ENCODE measurements at regions of chr22 and their contacts with region 1.

Region 1: GRCh38 chr22:44625981-44626687 is 75.9 kb upstream of the PRR5 start:
- DNase-seq: peak; percentile 45
- ATAC-seq: peak; percentile 86
- H3K4me3 ChIP-seq: no peak overlapping the region
- H3K27ac ChIP-seq: no peak overlapping the region
- H3K4me1 ChIP-seq: no peaks in the 10 kb centered on the region
- H3K27me3 ChIP-seq: peaks cover 8% of the 10 kb centered on the region; the same call in 1 of the 2 replicates
- CTCF ChIP-seq: peak; percentile 99
- POLR2A ChIP-seq: peak; percentile 63
- RAD21 ChIP-seq: peak; percentile 100

Region 2: GRCh38 chr22:44080936-44081861 is 544.9 kb before region 1 on chr22:
- CTCF ChIA-PET with region 1: interaction called, 4 read pairs
- POLR2A ChIA-PET with region 1: no interaction called
- dilution Hi-C with region 1: no loop called
- in situ Hi-C with region 1: loop called (anchors 5 kb)
- intact Hi-C with region 1: loop called (anchors 1 kb)
- DNase-seq: peak; percentile 68
- ATAC-seq: peak; percentile 92
- H3K4me3 ChIP-seq: no peak overlapping the region
- H3K27ac ChIP-seq: no peak overlapping the region
- H3K4me1 ChIP-seq: peaks cover 2% of the 10 kb centered on the region; the same call in 1 of the 2 replicates
- H3K27me3 ChIP-seq: no peaks in the 10 kb centered on the region
- CTCF ChIP-seq: peak; percentile 82
- POLR2A ChIP-seq: no peak
- RAD21 ChIP-seq: peak; percentile 92

Region 3: DNA sequence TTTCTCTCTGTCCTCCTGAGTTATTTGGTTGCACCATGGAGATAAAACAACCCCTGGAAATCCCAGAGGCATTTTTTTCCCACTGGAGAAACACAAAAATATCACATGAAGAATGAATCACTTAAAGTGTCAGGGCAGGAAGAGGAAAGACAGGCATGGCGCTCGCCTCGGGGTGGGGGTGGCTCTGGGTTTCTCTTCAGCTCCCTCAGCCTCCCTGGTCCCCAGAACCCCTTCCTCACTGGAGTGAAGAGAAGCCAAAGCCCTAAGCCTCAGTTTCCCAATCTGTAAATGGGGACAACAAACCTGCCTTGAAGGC is 314.3 kb before region 1 on chr22:
- CTCF ChIA-PET with region 1: no interaction called
- POLR2A ChIA-PET with region 1: no interaction called
- dilution Hi-C with region 1: no loop called
- in situ Hi-C with region 1: loop called (anchors 10 kb)
- intact Hi-C with region 1: no loop called
- DNase-seq: peak; percentile 73
- ATAC-seq: no peak
- H3K4me3 ChIP-seq: no peak overlapping the region
- H3K27ac ChIP-seq: no peak overlapping the region
- H3K4me1 ChIP-seq: peaks cover 18% of the 10 kb centered on the region
- H3K27me3 ChIP-seq: no peaks in the 10 kb centered on the region
- CTCF ChIP-seq: no peak
- POLR2A ChIP-seq: no peak
- RAD21 ChIP-seq: no peak; the same call in 1 of the 2 replicates

Region 4: DNA sequence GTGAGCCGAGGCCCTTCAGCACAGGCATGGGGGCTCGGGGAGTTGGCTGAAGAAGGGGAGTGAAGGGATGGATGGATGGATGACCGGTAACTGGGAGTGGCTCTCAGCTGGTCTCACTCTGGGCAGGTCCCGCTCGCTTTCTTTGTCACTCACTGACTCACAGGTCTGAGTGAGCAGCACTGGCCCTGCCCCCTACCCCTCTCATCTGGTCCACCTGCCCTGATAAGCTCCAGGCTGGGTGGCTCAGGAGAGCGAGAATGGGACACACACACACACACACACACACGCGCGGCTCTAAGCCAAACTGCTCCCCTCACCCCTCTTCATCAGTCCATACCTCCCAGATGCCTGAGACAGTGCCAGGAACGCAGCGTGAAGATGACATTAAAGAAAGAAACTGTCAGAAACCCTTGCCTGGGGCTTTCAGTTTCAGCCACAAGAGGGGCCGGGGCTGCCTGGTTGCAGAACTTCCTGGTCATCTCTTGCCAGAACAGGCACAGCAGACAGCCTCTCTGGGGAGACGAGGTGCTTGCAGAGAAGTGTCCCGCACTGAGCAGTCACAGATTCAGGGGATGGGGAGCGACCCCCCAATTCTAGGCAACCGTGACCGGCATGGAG is 296.8 kb before region 1 on chr22:
- CTCF ChIA-PET with region 1: no interaction called
- POLR2A ChIA-PET with region 1: no interaction called
- dilution Hi-C with region 1: no loop called
- in situ Hi-C with region 1: no loop called
- intact Hi-C with region 1: loop called (anchors 1 kb)
- DNase-seq: peak; percentile 27
- ATAC-seq: no peak
- H3K4me3 ChIP-seq: no peak overlapping the region
- H3K27ac ChIP-seq: no peak overlapping the region
- H3K4me1 ChIP-seq: peaks cover 13% of the 10 kb centered on the region; the same call in 1 of the 2 replicates
- H3K27me3 ChIP-seq: peaks cover 16% of the 10 kb centered on the region
- CTCF ChIP-seq: 0 out of 2 replicates have a peak, but pooled peaks have one; percentile 5
- POLR2A ChIP-seq: no peak
- RAD21 ChIP-seq: no peak

Region 5: GRCh38 chr22:44931077-44931540 is 305.0 kb after region 1 on chr22:
- CTCF ChIA-PET with region 1: no interaction called
- POLR2A ChIA-PET with region 1: no interaction called
- dilution Hi-C with region 1: no loop called
- in situ Hi-C with region 1: no loop called
- intact Hi-C with region 1: no loop called
- DNase-seq: peak; percentile 29
- ATAC-seq: peak; percentile 89
- H3K4me3 ChIP-seq: no peak overlapping the region
- H3K27ac ChIP-seq: no peak overlapping the region
- H3K4me1 ChIP-seq: no peaks in the 10 kb centered on the region
- H3K27me3 ChIP-seq: peaks cover 12% of the 10 kb centered on the region; the same call in 1 of the 2 replicates
- CTCF ChIP-seq: no peak
- POLR2A ChIP-seq: no peak
- RAD21 ChIP-seq: no peak

Measured in IMR-90 (cell line).